IMR-90 (cell line): ENCODE measurements at regions of chr10 and their contacts with region 1.

Region 1: DNA sequence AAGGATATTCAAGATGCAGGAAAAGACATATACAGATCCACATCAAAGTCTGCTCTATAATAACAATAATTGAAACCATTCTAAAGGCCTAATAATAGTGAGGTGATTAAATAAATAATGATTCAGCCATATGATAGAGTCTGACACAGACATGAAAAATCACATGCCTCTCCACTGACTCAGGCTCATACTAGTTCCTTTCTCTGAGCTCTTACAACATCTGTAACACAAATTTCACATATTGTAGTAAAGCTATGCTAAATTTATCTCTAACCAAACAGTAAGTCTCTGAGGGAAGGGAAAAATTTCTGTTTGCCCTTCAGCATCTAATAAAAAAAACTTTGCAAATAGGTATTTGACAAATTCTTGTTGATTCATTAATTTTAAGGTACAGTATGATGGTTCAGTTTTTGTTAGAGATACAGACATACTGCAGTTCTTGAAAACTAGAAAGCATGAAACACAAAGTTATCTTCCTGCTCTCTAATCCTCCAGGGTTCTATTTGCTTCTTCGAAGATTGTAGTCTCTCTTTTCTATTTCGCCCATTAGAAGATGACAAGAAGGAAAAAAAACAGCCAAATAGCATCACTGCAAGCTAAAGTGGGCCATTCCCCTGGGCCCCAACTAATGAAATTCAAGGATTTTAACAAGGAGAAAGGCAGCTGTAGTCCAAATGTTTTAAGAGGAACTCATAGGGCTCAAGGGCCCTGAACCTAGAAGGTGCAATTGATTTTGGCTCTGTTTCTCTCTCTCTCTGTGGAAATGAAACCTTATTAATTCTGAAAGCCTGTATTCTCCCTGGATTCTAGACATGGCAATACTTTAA is 53.9 kb downstream of the CUBN start:
- DNase-seq: peak; percentile 96
- ATAC-seq: peak; percentile 88
- H3K4me3 ChIP-seq: no peak overlapping the region
- H3K27ac ChIP-seq: peak overlapping the region; percentile 78
- H3K4me1 ChIP-seq: peaks cover 15% of the 10 kb centered on the region
- H3K27me3 ChIP-seq: no peaks in the 10 kb centered on the region
- CTCF ChIP-seq: no peak
- POLR2A ChIP-seq: no peak
- RAD21 ChIP-seq: 0 out of 2 replicates have a peak, but pooled peaks have one; percentile 10

Region 2: GRCh38 chr10:17128261-17128660 is 52.5 kb after region 1 on chr10:
- CTCF ChIA-PET with region 1: no interaction called
- POLR2A ChIA-PET with region 1: interaction called, 14 read pairs
- dilution Hi-C with region 1: no loop called
- in situ Hi-C with region 1: no loop called
- intact Hi-C with region 1: no loop called
- DNase-seq: no peak
- ATAC-seq: no peak
- H3K4me3 ChIP-seq: no peak overlapping the region
- H3K27ac ChIP-seq: no peak overlapping the region
- H3K4me1 ChIP-seq: peaks cover 2% of the 10 kb centered on the region; the same call in 1 of the 2 replicates
- H3K27me3 ChIP-seq: no peaks in the 10 kb centered on the region
- CTCF ChIP-seq: no peak
- POLR2A ChIP-seq: no peak
- RAD21 ChIP-seq: no peak